ENCODE measurements at regions of chr10 and their contacts with region 1.

Region 1: DNA sequence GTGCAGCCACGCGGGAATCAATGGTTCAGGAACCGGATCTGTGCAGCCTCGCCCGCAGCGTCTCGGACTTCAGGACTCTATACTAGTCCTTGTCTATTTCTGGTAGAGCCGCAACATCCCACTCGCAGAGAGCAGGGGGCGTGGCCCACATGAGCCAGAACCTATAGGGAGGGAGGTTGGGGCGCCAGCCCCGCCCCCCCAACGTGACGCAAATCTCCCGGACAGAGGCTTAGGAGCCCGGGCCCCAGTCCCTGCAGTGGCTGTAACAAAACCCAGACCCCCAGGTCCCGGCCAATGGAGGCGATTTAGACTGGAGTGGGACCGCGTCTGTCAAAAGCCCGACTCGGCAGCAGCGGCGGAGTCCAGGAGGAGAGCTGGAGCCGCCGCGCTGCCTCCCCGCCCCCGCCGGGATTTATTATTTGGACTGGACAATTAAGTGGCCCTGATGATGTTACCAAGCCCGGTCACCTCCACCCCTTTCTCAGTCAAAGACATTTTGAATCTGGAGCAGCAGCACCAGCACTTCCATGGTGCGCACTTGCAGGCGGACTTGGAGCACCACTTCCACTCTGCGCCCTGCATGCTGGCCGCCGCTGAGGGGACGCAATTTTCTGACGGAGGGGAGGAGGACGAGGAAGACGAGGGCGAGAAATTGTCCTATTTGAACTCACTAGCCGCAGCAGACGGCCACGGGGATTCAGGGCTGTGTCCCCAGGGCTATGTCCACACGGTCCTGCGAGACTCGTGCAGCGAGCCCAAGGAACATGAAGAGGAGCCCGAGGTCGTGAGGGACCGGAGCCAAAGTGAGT is at the start of gene NKX2-3:
- DNase-seq: peak; percentile 40
- H3K4me3 ChIP-seq: no peak within 1 kb of the TSS
- H3K27ac ChIP-seq: no peak within 1 kb of the TSS
- H3K4me1 ChIP-seq: no peaks in the 10 kb centered on the region
- H3K27me3 ChIP-seq: peaks cover 93 to 97% of the 10 kb centered on the region in 2 experiments
- CTCF ChIP-seq: no peak
- POLR2A ChIP-seq: no peak
- total RNA-seq, gene NKX2-3: not detected in 2 replicates

Region 2: GRCh38 chr10:99467236-99467999 is 65.5 kb before region 1 on chr10:
- CTCF ChIA-PET with region 1: no interaction called
- POLR2A ChIA-PET with region 1: no interaction called
- dilution Hi-C with region 1: no loop called
- intact Hi-C with region 1: loop called (anchors 2 kb)
- DNase-seq: peak; percentile 97
- H3K4me3 ChIP-seq: peak overlapping the region in 1 of 3 experiments; percentile 11
- H3K27ac ChIP-seq: peak overlapping the region; percentile 95
- H3K4me1 ChIP-seq: peaks cover 35% of the 10 kb centered on the region
- H3K27me3 ChIP-seq: no peaks in the 10 kb centered on the region
- CTCF ChIP-seq: no peak
- POLR2A ChIP-seq: no peak

Region 3: GRCh38 chr10:99548041-99548530 is 15.2 kb after region 1 on chr10:
- CTCF ChIA-PET with region 1: no interaction called
- POLR2A ChIA-PET with region 1: no interaction called
- dilution Hi-C with region 1: no loop called
- intact Hi-C with region 1: no loop called
- DNase-seq: peak; percentile 47
- H3K4me3 ChIP-seq: no peak overlapping the region
- H3K27ac ChIP-seq: no peak overlapping the region
- H3K4me1 ChIP-seq: no peaks in the 10 kb centered on the region
- H3K27me3 ChIP-seq: peaks cover 24 to 48% of the 10 kb centered on the region in 2 experiments
- CTCF ChIP-seq: peak in 1 of 2 donors; percentile 67
- POLR2A ChIP-seq: no peak

Measured in endothelial cell of umbilical vein (primary cell).